Common myeloid progenitor, CD34-positive (primary cell): ENCODE measurements at regions of chr6 and their contacts with region 1.

Region 1: GRCh38 chr6:26156076-26156849 is 69.0 kb downstream of the HFE start:
- DNase-seq: peak; percentile 79 to 91 (median 90)
- H3K4me3 ChIP-seq: peak overlapping the region; percentile 78 to 94 (median 92)
- H3K27ac ChIP-seq: peak overlapping the region; percentile 50 to 87
- H3K4me1 ChIP-seq: peaks cover 10 to 31% (median 23%) of the 10 kb centered on the region in 4 experiments
- H3K27me3 ChIP-seq: no peaks in the 10 kb centered on the region

Region 2: DNA sequence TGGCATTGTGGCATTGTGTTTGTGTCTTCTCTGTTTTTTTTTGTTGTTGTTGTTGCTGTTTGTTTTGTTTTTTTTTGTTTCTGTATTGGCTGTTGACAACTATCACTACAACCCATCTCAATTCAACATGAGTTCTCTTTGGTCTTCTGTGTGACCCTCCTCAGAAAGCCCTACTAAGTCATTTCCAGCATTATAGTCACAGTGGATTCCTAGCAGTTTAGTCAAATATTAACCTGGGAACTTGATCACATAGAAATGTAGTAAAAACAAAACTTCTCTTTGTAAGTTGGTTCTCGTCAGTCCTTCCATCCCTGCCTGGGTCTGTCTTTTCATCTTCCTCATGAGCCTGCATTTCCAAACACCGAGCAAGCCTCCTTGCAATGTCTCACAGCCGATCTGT is 242.5 kb before region 1 on chr6:
- CTCF ChIA-PET with region 1: no interaction called
- POLR2A ChIA-PET with region 1: no interaction called
- DNase-seq: no peak
- H3K4me3 ChIP-seq: no peak overlapping the region
- H3K27ac ChIP-seq: no peak overlapping the region
- H3K4me1 ChIP-seq: no peaks in the 10 kb centered on the region
- H3K27me3 ChIP-seq: no peaks in the 10 kb centered on the region

Region 3: DNA sequence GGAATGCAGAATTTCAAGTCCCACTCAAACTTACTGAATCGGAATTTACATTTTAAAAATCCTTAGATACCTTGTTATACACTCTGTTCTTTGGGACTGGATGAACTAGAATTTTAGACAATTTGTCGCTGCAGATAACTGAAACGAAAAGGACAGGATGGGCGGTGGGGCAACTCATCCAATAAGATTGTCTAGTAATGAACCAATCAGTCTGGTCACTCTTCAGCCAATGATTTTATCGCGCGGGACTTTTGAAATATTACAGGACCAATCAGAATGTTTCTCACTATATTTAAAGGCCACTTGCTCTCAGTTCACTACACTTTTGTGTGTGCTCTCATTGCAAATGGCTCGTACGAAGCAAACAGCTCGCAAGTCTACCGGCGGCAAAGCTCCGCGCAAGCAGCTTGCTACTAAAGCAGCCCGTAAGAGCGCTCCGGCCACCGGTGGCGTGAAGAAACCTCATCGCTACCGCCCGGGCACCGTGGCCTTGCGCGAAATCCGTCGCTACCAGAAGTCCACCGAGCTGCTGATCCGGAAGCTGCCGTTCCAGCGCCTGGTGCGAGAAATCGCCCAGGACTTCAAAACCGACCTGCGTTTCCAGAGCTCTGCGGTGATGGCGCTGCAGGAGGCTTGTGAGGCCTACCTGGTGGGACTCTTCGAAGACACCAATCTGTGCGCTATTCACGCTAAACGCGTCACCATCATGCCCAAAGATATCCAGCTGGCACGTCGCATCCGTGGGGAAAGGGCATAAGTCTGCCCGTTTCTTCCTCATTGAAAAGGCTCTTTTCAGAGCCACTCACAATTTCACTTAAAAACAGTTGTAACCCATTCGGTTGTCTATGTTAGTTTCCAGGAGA is 111.0 kb before region 1 on chr6:
- CTCF ChIA-PET with region 1: no interaction called
- POLR2A ChIA-PET with region 1: interaction called, 16 read pairs
- DNase-seq: peak; percentile 92 to 96 (median 96)
- H3K4me3 ChIP-seq: peak overlapping the region; percentile 33 to 94 (median 79)
- H3K27ac ChIP-seq: peak overlapping the region; percentile 37 to 65
- H3K4me1 ChIP-seq: peaks cover 4 to 41% (median 27%) of the 10 kb centered on the region in 4 experiments
- H3K27me3 ChIP-seq: no peaks in the 10 kb centered on the region

Region 4: DNA sequence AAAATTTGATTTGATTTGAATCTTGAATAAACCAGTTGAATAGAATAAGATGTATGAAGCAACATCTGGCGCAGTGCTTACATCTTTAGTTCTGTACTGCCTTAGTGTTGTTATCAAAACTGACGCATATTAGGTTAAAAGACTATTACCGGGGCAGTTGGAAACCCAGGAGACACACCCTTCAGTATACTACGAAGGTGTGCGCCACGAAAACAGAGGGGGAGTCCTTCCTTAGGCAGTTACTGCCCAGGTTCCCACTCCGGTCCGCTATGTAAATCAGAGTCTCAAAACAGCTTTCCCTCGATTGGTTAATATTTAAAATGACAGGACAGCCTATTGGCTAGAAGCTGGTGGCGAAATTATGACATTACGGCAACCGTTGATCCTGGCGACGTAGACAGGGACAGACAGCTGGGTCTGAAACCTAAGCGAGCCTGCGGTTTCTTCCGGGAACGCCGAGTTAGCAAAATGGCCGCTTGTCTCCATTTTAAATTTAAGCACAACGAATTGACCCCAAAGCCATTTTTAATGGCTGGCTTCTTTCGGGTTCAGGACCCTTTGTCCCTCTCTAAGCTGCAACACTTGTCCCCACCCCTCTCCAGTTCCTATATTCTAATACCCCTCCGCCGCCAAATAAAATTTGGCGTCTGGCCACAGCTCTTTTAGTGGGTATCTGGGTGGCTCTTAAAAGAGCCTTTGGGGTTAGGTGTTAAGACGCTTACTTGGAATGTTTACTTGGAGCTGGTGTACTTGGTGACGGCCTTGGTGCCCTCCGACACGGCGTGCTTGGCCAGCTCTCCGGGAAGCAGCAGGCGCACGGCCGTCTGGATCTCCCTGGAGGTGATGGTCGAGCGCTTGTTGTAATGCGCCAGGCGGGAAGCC is 33.2 kb before region 1 on chr6:
- CTCF ChIA-PET with region 1: interaction called, 27 read pairs
- POLR2A ChIA-PET with region 1: interaction called, 119 read pairs
- DNase-seq: peak; percentile 97 to 99 (median 98)
- H3K4me3 ChIP-seq: peak overlapping the region; percentile 56 to 100 (median 96)
- H3K27ac ChIP-seq: peak overlapping the region; percentile 84 to 96
- H3K4me1 ChIP-seq: peaks cover 11 to 38% (median 26%) of the 10 kb centered on the region in 4 experiments
- H3K27me3 ChIP-seq: no peaks in the 10 kb centered on the region

Region 5: DNA sequence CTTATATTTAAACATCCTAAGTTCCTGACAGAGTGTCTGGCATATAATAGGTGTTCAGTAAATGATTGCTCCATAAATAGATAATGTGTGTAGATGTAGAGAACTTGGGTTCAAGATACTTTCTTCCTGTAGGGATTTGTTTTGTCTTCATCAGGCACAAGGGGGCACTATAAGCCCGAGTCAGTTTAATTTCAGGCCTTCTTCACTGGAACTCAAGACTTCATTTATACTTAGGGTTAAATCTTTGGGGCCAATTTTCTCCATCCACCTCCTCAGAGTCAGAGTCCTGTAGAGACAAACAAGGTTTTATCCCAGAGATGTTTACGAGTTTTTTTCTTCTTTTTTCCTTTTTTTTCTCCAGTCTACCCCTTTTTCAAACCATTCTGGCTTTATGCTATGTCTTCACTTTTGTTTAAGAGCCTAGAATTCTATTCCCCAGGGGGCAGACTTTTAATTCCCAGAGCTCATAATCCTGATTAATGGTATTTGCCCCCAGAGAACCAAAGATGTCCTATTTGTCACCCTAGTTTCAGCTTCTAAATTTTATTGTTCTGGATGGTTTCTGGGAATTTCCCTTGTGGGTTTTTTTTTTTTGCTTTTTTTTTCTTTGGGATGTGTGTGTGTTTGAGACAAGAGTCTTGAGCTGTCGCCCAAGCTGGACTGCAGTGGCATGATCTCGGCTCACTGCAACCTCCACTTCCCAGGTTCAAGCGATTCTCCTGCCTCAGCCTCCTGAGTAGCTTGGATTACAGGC is 19.3 kb after region 1 on chr6:
- CTCF ChIA-PET with region 1: interaction called, 21 read pairs
- POLR2A ChIA-PET with region 1: interaction called, 69 read pairs
- DNase-seq: peak; percentile 82 to 89 (median 85)
- H3K4me3 ChIP-seq: no peak overlapping the region
- H3K27ac ChIP-seq: no peak overlapping the region
- H3K4me1 ChIP-seq: peaks cover 6 to 34% (median 22%) of the 10 kb centered on the region in 4 experiments
- H3K27me3 ChIP-seq: no peaks in the 10 kb centered on the region

Region 6: DNA sequence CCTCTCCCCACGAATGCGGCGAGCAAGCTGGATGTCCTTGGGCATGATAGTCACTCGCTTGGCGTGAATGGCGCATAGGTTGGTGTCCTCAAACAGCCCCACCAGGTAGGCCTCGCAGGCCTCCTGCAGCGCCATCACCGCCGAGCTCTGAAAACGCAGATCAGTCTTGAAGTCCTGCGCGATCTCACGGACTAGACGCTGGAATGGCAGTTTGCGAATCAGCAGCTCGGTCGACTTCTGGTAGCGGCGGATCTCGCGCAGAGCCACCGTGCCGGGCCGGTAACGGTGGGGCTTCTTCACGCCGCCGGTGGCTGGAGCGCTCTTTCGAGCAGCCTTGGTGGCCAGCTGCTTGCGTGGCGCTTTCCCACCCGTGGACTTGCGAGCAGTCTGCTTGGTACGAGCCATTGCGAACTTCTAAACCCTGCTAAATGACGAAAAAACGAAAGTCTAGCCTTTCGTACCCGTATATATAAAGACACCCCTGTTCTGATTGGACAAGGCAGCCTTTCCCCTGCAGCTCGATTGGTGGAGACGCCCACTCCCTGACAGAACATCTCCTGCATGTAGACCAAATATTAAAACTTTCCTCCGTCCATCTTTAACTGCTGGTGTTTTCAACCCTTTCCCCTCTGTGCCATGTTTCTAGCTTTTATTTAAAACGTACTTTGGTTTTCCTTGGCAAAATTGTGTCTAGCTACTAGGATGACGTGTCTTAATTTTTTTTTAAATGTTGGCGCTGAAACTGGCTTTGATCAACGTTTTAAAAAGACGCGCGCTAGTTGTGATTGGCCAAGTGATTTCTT is 40.8 kb after region 1 on chr6:
- CTCF ChIA-PET with region 1: interaction called, 4 read pairs
- POLR2A ChIA-PET with region 1: interaction called, 43 read pairs
- DNase-seq: peak; percentile 93 to 97 (median 96)
- H3K4me3 ChIP-seq: peak overlapping the region; percentile 50 to 99 (median 96)
- H3K27ac ChIP-seq: peak overlapping the region; percentile 46 to 91
- H3K4me1 ChIP-seq: peaks cover 15 to 46% (median 36%) of the 10 kb centered on the region in 4 experiments
- H3K27me3 ChIP-seq: no peaks in the 10 kb centered on the region

Region 7: GRCh38 chr6:26216356-26216885 is 60.2 kb after region 1 on chr6:
- CTCF ChIA-PET with region 1: interaction called, 10 read pairs
- POLR2A ChIA-PET with region 1: interaction called, 21 read pairs
- DNase-seq: peak; percentile 97 to 99 (median 99)
- H3K4me3 ChIP-seq: peak overlapping the region; percentile 37 to 92 (median 79)
- H3K27ac ChIP-seq: peak overlapping the region; percentile 67 to 89
- H3K4me1 ChIP-seq: peaks cover 13 to 52% (median 27%) of the 10 kb centered on the region in 4 experiments
- H3K27me3 ChIP-seq: no peaks in the 10 kb centered on the region